ENCODE measurements at regions of chr3 and their contacts with region 1.

Region 1: DNA sequence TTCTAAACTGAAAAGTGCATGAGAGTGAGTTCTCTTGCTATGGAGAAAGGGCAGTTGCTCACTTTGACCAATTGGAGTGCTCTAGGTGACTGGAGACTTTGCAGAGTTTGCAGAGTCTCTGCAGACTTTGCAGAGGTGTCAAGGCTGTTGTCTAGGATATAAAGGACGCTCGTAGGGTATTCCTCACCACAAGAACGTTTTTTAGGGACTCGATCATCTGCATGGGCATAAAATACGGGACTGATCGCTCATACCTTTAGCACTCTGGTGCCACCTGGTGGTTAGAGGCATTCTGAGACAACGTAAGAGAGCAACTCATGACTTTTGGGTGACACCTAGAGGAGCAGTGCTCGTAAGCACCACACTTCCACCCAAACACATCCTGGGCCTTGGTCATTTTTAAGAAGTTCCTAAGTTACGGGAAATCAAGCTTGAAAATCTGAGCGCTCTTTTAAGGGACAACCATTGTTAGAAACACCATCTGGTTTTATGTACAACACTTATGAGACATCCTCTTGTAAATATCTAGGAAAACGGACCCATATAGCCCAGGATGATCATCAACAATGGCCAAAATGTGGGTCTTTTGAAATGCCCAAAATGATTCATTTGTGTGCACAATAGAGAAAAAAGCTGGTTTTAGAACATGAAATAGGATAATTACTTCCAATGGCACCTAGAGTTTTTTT is 51.6 kb upstream of the XCR1 start:
- DNase-seq: peak; percentile 82
- ATAC-seq: peak; percentile 99
- H3K4me3 ChIP-seq: no peak overlapping the region
- H3K27ac ChIP-seq: no peak overlapping the region
- H3K4me1 ChIP-seq: no peaks in the 10 kb centered on the region
- H3K27me3 ChIP-seq: 0 out of 4 replicates have a peak, but pooled peaks cover 0 to 2% of the 10 kb centered on the region in 2 experiments
- CTCF ChIP-seq: peak; percentile 93 to 100 (median 100); a peak in 5 of 6 replicates
- EP300 ChIP-seq: no peak
- POLR2A ChIP-seq: no peak
- RAD21 ChIP-seq: peak; percentile 100

Region 2: DNA sequence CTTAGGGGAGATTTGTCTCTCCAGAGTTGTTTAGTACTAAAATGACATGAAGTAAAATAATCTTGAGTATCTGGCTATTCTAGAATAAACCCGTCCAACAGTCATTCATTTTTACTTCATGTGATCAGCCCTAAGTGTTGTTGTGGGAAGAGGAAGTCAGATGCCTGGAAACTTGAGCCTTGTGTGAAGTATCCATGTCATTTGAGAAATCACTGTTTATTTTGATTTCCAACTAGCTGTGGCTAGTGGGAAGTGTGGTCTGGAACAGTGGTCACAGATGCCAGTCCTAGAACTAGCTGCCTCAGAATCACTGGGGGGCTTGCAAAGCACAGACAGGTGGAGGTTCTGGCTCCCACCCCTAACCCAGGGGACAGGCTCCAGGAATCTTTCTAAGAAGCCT is 562.0 kb before region 1 on chr3:
- CTCF ChIA-PET with region 1: interaction called, 6 read pairs
- POLR2A ChIA-PET with region 1: no interaction called
- RAD21 ChIA-PET with region 1: interaction called, 3 read pairs
- SMC1A ChIA-PET with region 1: no interaction called
- in situ Hi-C with region 1: loop called (anchors 10 kb)
- intact Hi-C with region 1: no loop called
- DNase-seq: no peak
- ATAC-seq: no peak
- H3K4me3 ChIP-seq: no peak overlapping the region
- H3K27ac ChIP-seq: no peak overlapping the region
- H3K4me1 ChIP-seq: no peaks in the 10 kb centered on the region
- H3K27me3 ChIP-seq: no peaks in the 10 kb centered on the region
- CTCF ChIP-seq: no peak
- EP300 ChIP-seq: no peak
- POLR2A ChIP-seq: no peak
- RAD21 ChIP-seq: no peak

Region 3: DNA sequence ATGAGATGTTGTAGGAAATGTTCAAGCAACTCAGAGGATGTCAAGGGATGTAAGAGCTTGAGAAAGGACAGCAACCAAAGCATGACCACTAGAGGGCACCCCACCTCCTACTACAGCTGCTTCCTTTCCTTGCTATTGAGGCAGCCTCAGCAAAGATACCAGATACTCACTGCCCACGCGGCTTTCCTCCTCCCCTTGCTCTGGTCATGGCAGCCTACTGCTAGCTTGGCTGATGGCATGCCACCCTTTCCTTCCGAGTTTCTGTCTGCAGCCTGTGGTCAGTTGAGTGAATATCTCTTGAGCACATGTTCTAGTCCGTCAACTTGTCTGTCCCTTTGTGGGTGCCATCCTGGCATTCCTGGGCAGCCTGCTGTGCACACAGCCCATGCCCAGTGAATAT is 140.0 kb before region 1 on chr3:
- CTCF ChIA-PET with region 1: interaction called, 478 read pairs
- POLR2A ChIA-PET with region 1: interaction called, 29 read pairs
- RAD21 ChIA-PET with region 1: interaction called, 213 read pairs
- SMC1A ChIA-PET with region 1: interaction called, 523 read pairs
- in situ Hi-C with region 1: loop called (anchors 5 kb)
- intact Hi-C with region 1: loop called (anchors 1 kb)
- DNase-seq: peak; percentile 66
- ATAC-seq: peak; percentile 97
- H3K4me3 ChIP-seq: no peak overlapping the region
- H3K27ac ChIP-seq: no peak overlapping the region
- H3K4me1 ChIP-seq: peaks cover 7% of the 10 kb centered on the region
- H3K27me3 ChIP-seq: no peaks in the 10 kb centered on the region
- CTCF ChIP-seq: peak; percentile 88 to 94 (median 91); a peak in 5 of 6 replicates
- EP300 ChIP-seq: no peak
- POLR2A ChIP-seq: no peak
- RAD21 ChIP-seq: peak; percentile 94

Region 4: DNA sequence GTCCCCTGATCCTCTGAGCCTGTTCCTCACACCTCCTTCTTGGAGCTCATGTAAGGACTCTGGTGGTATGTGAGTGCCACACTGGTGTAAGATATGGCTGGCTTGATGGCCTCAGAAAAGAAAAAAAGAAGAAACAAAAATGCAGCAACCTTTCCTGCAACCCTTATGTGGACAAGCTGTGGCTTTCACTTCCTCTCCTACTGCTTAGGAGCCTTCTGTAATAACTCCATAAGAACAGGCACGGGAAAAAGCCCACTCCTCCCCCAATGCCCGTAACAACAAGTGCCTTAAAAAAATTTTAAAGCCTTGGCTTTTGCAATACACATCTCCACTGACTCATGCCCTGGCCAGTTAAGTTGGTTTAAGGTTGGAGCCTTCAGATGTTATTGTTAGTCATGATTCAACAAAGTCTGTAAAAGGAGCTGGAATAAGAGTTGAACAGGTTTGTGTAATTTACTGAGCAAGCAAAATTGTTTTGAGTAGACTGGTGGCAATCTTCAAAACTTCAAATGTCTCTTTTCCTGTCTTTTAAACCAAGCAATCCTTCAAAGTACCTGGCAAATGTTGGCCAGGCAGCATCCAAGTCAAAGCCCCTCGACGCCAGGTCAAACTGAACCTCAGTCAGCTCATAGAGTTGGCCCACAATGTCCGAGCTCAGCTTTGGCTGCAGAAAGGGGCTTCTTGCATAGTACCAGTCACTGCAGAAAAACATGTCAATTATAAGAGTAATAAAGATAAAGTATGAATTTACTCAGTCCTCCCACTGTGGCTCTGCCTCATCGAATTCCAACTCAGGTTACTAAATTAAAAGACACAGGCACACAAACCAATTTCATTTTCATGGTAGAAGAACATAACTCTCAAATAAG is 106.1 kb before region 1 on chr3:
- CTCF ChIA-PET with region 1: interaction called, 11 read pairs
- POLR2A ChIA-PET with region 1: no interaction called
- RAD21 ChIA-PET with region 1: interaction called, 20 read pairs
- SMC1A ChIA-PET with region 1: interaction called, 9 read pairs
- in situ Hi-C with region 1: no loop called
- intact Hi-C with region 1: no loop called
- DNase-seq: no peak
- ATAC-seq: peak; percentile 85
- H3K4me3 ChIP-seq: peak overlapping the region; percentile 3; the same call in 1 of the 2 replicates
- H3K27ac ChIP-seq: 0 out of 2 replicates have a peak overlapping the region, but pooled peaks have one; percentile 27
- H3K4me1 ChIP-seq: peaks cover 20% of the 10 kb centered on the region
- H3K27me3 ChIP-seq: no peaks in the 10 kb centered on the region
- CTCF ChIP-seq: no peak
- EP300 ChIP-seq: 0 out of 4 replicates have a peak, but pooled peaks of 1 of the 2 experiments have one; percentile 50
- POLR2A ChIP-seq: no peak
- RAD21 ChIP-seq: no peak

Region 5: DNA sequence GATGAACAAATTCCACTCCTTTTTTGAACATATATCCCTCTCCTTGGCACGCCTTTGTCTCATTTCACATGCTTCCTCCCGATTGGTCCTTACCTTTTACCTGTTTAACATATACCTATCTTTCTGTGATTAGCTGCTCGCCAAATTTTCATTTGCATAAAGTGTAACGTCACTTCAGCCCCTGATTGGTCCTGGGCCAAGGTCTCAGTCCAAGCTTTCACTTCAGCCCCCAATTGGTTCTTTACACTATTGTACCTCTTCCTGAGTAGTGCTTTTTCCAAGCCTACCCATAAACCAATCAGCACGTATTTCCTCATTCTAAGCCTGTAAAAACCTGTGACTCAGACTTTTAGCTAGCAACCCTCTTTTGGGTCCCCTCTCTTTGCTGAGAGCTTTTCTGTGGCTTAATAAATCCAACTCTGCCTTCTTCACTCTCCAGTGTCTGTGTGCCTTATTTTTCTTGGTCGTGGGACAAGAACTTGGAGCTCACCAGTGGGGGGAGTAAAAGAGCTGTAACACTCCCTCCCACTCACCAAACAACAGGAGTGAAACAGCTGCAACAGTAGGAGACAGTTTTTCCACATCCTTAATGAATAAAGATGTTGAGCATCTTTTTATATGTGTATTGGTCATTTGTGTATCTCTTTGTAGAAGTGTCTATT is 51.0 kb before region 1 on chr3:
- CTCF ChIA-PET with region 1: interaction called, 4 read pairs
- POLR2A ChIA-PET with region 1: interaction called, 3 read pairs
- RAD21 ChIA-PET with region 1: interaction called, 12 read pairs
- SMC1A ChIA-PET with region 1: interaction called, 15 read pairs
- in situ Hi-C with region 1: no loop called
- intact Hi-C with region 1: no loop called
- DNase-seq: no peak
- ATAC-seq: no peak
- H3K4me3 ChIP-seq: no peak overlapping the region
- H3K27ac ChIP-seq: no peak overlapping the region
- H3K4me1 ChIP-seq: peaks cover 19% of the 10 kb centered on the region
- H3K27me3 ChIP-seq: no peaks in the 10 kb centered on the region
- CTCF ChIP-seq: no peak
- EP300 ChIP-seq: no peak
- POLR2A ChIP-seq: no peak
- RAD21 ChIP-seq: no peak

Region 6: DNA sequence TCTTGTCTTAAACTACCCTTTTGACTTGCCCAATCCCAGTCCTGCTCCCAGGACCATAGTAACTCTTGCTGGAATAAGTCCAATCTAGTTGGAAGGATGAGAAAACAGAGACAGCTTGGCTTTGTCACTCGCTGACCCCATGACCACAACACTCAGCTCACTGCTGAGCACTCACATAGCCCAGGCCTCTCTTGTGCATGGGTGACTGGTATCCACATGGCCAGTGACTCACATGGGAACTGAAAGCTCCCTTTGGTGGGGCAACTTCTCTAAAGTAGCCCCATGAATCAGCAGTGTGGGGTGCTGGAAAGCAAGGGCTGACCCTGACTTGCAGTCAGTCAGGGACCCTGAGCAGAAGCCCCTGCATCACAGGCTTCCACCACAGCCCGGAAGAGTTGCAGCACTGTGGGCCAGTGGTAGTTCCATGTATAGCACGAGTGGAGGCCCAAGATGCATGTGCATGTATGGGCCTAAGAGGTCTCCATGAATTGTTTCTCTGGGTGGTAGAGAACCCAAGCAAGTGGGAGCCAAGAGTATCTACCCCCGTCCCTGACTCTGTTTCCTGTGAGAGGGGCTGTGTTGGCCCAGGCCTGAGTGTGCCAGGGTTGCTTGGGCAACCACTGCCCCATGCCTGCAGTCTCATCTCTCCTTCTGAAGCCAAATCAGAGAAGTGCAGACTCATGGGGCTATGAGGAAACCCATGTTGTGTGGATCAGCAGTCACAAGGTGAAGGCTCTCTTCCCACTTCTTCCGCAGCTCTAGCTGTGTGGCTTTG is 10.6 kb after region 1 on chr3:
- CTCF ChIA-PET with region 1: interaction called, 80 read pairs
- POLR2A ChIA-PET with region 1: interaction called, 3 read pairs
- RAD21 ChIA-PET with region 1: interaction called, 14 read pairs
- SMC1A ChIA-PET with region 1: interaction called, 57 read pairs
- in situ Hi-C with region 1: no loop called
- intact Hi-C with region 1: no loop called
- DNase-seq: peak; percentile 78
- ATAC-seq: peak; percentile 90
- H3K4me3 ChIP-seq: no peak overlapping the region
- H3K27ac ChIP-seq: peak overlapping the region; percentile 20; the same call in 1 of the 2 replicates
- H3K4me1 ChIP-seq: peaks cover 58% of the 10 kb centered on the region
- H3K27me3 ChIP-seq: no peaks in the 10 kb centered on the region
- CTCF ChIP-seq: no peak
- EP300 ChIP-seq: peak; percentile 24 to 75; a peak in 2 of 4 replicates
- POLR2A ChIP-seq: no peak
- RAD21 ChIP-seq: 0 out of 2 replicates have a peak, but pooled peaks have one; percentile 5

Region 7: GRCh38 chr3:46368569-46368968 is 289.7 kb after region 1 on chr3:
- CTCF ChIA-PET with region 1: interaction called, 714 read pairs
- POLR2A ChIA-PET with region 1: no interaction called
- RAD21 ChIA-PET with region 1: interaction called, 396 read pairs
- SMC1A ChIA-PET with region 1: interaction called, 581 read pairs
- in situ Hi-C with region 1: no loop called
- intact Hi-C with region 1: no loop called
- DNase-seq: peak; percentile 70
- ATAC-seq: peak; percentile 89
- H3K4me3 ChIP-seq: no peak overlapping the region
- H3K27ac ChIP-seq: no peak overlapping the region
- H3K4me1 ChIP-seq: peaks cover 14% of the 10 kb centered on the region
- H3K27me3 ChIP-seq: no peaks in the 10 kb centered on the region
- CTCF ChIP-seq: peak; percentile 64 to 74 (median 72)
- EP300 ChIP-seq: no peak
- POLR2A ChIP-seq: no peak
- RAD21 ChIP-seq: peak; percentile 87

Region 8: GRCh38 chr3:46895204-46895660 is 816.4 kb after region 1 on chr3:
- CTCF ChIA-PET with region 1: no interaction called
- POLR2A ChIA-PET with region 1: no interaction called
- RAD21 ChIA-PET with region 1: no interaction called
- SMC1A ChIA-PET with region 1: no interaction called
- in situ Hi-C with region 1: no loop called
- intact Hi-C with region 1: no loop called
- DNase-seq: peak; percentile 34
- ATAC-seq: peak; percentile 87
- H3K4me3 ChIP-seq: no peak overlapping the region
- H3K27ac ChIP-seq: no peak overlapping the region
- H3K4me1 ChIP-seq: no peaks in the 10 kb centered on the region; the same call in 1 of the 2 replicates
- H3K27me3 ChIP-seq: peaks cover 2 to 3% of the 10 kb centered on the region in 2 experiments; a peak in 3 of 4 replicates
- CTCF ChIP-seq: peak; percentile 92 to 93 (median 92); a peak in 5 of 6 replicates
- EP300 ChIP-seq: no peak
- POLR2A ChIP-seq: no peak
- RAD21 ChIP-seq: peak; percentile 79

Region 9: GRCh38 chr3:47065681-47066080 is 986.8 kb after region 1 on chr3:
- CTCF ChIA-PET with region 1: no interaction called
- POLR2A ChIA-PET with region 1: no interaction called
- RAD21 ChIA-PET with region 1: no interaction called
- SMC1A ChIA-PET with region 1: no interaction called
- in situ Hi-C with region 1: no loop called
- intact Hi-C with region 1: no loop called
- DNase-seq: no peak
- ATAC-seq: no peak
- H3K4me3 ChIP-seq: no peak overlapping the region
- H3K27ac ChIP-seq: no peak overlapping the region
- H3K4me1 ChIP-seq: no peaks in the 10 kb centered on the region
- H3K27me3 ChIP-seq: no peaks in the 10 kb centered on the region
- CTCF ChIP-seq: no peak
- EP300 ChIP-seq: no peak
- POLR2A ChIP-seq: no peak
- RAD21 ChIP-seq: no peak

Measured in GM12878 (cell line).